Naive thymus-derived CD4-positive, alpha-beta T cell (primary cell): ENCODE measurements at regions of chr2 and their contacts with region 1.

Region 1: DNA sequence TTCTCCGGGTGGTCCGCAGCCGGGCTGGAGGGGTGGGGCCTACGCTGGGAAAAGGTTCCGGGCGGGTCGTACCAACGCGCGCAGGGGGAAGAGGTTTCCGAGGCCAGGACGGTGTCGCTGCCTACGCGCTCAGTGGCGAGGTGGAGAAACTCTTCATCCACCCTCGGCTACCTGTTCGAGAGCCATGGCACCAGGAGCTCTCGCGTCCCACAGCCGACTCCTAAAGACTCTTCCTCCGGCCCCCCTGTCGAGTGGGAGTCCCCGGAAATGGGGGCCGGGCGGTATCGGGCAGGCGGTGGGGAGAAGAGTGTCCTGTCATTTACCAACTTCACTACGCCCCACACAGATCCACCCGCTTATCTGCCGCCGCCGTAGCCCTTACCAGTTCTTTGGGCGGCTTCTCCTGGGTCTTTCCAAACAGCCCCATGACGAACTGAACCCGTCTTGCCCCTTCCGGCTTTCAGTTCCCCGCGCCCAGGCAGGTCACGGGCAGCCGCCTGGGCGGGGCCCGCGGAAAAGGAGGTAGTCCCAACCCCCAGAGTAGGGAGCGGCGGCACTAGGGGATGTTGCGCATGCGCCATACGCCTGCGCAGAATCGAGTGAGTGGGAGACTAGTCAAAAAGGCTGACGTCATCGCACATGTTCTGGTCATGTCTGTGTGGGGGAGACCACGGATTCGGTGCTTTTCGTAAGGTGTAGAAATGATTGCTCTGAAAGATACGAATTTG is at the start of gene CHMP3:
- DNase-seq: peak; percentile 95 to 98 (median 96)
- ATAC-seq: peak; percentile 94
- H3K4me3 ChIP-seq: peak within 1 kb of the TSS; percentile 72
- H3K4me3 Mint-ChIP-seq: peak within 1 kb of the TSS in 9 of 10 donors; percentile 95 to 99 (median 97)
- H3K27ac ChIP-seq: peak within 1 kb of the TSS; percentile 99
- H3K27ac Mint-ChIP-seq: peak within 1 kb of the TSS; percentile 96 to 100 (median 98)
- H3K4me1 ChIP-seq: peaks cover 11 to 25% of the 10 kb centered on the region in 2 donors
- H3K4me1 Mint-ChIP-seq: peaks cover 11 to 42% (median 29%) of the 10 kb centered on the region in 7 donors
- H3K27me3 ChIP-seq: no peaks in the 10 kb centered on the region
- H3K27me3 Mint-ChIP-seq: peaks cover 0 to 7% (median 0%) of the 10 kb centered on the region in 5 donors
- total RNA-seq, gene CHMP3: 39.9 to 103 (median 71.4) TPM

Region 2: DNA sequence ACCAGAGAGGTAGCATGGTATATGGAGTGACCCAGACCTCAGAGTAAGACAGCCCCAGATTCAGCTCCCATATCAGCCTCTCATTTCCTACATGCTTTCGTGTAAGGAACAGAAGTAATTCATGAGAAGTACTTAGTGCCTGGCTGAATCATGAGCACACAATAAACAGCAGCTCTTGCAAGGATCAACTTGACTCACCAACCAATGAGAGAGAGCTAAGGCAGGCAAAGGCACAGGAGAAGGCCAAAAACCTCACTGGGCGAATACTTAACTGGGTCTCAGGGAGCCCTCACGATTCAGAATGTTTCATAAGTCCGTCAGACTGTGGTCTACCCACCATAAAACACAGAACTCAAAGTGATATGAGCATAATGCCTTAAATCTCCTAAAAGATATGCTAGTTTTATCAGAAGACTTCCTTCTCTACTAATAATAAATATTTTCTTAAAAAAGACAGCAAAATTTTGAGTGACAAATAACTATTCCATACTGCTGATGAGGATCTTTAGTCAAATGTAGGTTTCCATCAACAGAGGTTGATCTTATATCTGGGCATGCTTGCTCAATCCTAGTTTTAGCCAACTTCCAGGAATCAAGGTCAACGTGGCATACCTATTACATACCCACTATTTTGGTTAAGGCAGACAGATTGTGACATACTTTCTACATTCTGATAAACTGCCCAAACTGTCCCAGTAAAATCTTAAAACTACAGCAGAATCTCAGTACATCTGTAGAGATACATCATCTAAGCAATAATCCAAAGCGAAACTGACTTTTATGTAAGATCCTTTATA is 402.7 kb before region 1 on chr2:
- CTCF ChIA-PET with region 1: no interaction called
- POLR2A ChIA-PET with region 1: no interaction called
- intact Hi-C with region 1: no loop called
- DNase-seq: no peak
- ATAC-seq: no peak
- H3K4me3 ChIP-seq: no peak overlapping the region
- H3K4me3 Mint-ChIP-seq: no peak overlapping the region
- H3K27ac ChIP-seq: no peak overlapping the region
- H3K27ac Mint-ChIP-seq: no peak overlapping the region
- H3K4me1 ChIP-seq: no peaks in the 10 kb centered on the region
- H3K4me1 Mint-ChIP-seq: no peaks in the 10 kb centered on the region
- H3K27me3 ChIP-seq: no peaks in the 10 kb centered on the region
- H3K27me3 Mint-ChIP-seq: no peaks in the 10 kb centered on the region

Region 3: GRCh38 chr2:86195055-86195807 is 367.9 kb before region 1 on chr2 and contains the start of gene IMMT:
- CTCF ChIA-PET with region 1: no interaction called
- POLR2A ChIA-PET with region 1: no interaction called
- intact Hi-C with region 1: loop called (anchors 1 to 2 kb)
- DNase-seq: peak; percentile 86 to 96 (median 94)
- ATAC-seq: peak; percentile 94
- H3K4me3 ChIP-seq: peak within 1 kb of the TSS; percentile 74
- H3K4me3 Mint-ChIP-seq: peak within 1 kb of the TSS; percentile 86 to 99 (median 95)
- H3K27ac ChIP-seq: peak within 1 kb of the TSS; percentile 97
- H3K27ac Mint-ChIP-seq: peak within 1 kb of the TSS; percentile 82 to 97 (median 90)
- H3K4me1 ChIP-seq: peaks cover 15 to 23% of the 10 kb centered on the region in 2 donors
- H3K4me1 Mint-ChIP-seq: peaks cover 35 to 74% (median 60%) of the 10 kb centered on the region in 7 donors
- H3K27me3 ChIP-seq: no peaks in the 10 kb centered on the region
- H3K27me3 Mint-ChIP-seq: no peaks in the 10 kb centered on the region
- total RNA-seq, gene IMMT: 59.2 to 164 (median 77.0) TPM

Region 4: DNA sequence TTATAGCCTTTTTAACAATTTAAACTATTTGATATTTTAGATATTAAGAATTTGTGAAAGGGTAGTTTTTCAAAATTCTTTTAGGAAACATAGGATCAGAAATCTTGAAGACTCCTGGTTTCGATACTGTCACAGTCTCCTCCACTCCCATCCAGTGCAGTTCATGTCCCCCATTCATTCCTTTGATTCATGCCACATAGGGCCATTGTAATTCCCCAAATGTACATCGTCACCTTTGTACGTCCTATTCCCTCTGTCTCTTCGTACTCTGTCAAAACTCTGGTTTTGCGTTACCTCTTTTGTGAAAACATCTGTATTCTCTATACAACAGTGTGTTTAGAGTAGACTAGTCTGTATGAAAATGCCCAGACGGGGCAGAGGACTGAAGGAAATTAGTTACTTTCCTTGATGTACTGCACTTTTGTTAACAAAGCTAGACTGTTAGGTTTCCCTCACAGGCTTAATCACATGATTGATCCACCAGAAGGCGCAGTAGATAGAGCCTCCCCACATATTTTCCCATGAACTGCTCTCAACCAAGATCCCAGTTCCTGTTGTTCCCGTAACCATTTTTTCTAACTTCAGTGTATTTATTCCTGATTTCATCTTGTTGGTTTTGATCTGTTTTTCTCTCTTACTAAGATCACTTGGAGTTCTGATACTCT is 361.3 kb before region 1 on chr2:
- CTCF ChIA-PET with region 1: no interaction called
- POLR2A ChIA-PET with region 1: no interaction called
- intact Hi-C with region 1: loop called in 1 of 2 experiments (anchors 1 kb)
- DNase-seq: no peak
- ATAC-seq: no peak
- H3K4me3 ChIP-seq: no peak overlapping the region
- H3K4me3 Mint-ChIP-seq: peak overlapping the region in 8 of 10 donors; percentile 27 to 95 (median 46)
- H3K27ac ChIP-seq: no peak overlapping the region
- H3K27ac Mint-ChIP-seq: peak overlapping the region in 5 of 9 donors; percentile 6 to 82 (median 55)
- H3K4me1 ChIP-seq: peaks cover 0 to 4% of the 10 kb centered on the region in 2 donors
- H3K4me1 Mint-ChIP-seq: peaks cover 22 to 58% (median 45%) of the 10 kb centered on the region in 7 donors
- H3K27me3 ChIP-seq: no peaks in the 10 kb centered on the region
- H3K27me3 Mint-ChIP-seq: no peaks in the 10 kb centered on the region

Region 5: GRCh38 chr2:86487062-86487461 is 76.0 kb before region 1 on chr2:
- CTCF ChIA-PET with region 1: no interaction called
- POLR2A ChIA-PET with region 1: no interaction called
- intact Hi-C with region 1: loop called in 1 of 2 experiments (anchors 5 kb)
- DNase-seq: peak in 2 of 9 donors; percentile 14 to 22
- ATAC-seq: no peak
- H3K4me3 ChIP-seq: no peak overlapping the region
- H3K4me3 Mint-ChIP-seq: no peak overlapping the region
- H3K27ac ChIP-seq: no peak overlapping the region
- H3K27ac Mint-ChIP-seq: peak overlapping the region in 8 of 9 donors; percentile 1 to 75 (median 44)
- H3K4me1 ChIP-seq: no peaks in the 10 kb centered on the region
- H3K4me1 Mint-ChIP-seq: peaks cover 0 to 34% (median 8%) of the 10 kb centered on the region in 7 donors
- H3K27me3 ChIP-seq: no peaks in the 10 kb centered on the region
- H3K27me3 Mint-ChIP-seq: no peaks in the 10 kb centered on the region

Region 6: GRCh38 chr2:86518481-86518880 is 44.6 kb before region 1 on chr2:
- CTCF ChIA-PET with region 1: no interaction called
- POLR2A ChIA-PET with region 1: interaction called, 3 read pairs
- intact Hi-C with region 1: loop called in 1 of 2 experiments (anchors 5 kb)
- DNase-seq: peak in 7 of 9 donors; percentile 23 to 59 (median 53)
- ATAC-seq: peak; percentile 73
- H3K4me3 ChIP-seq: no peak overlapping the region
- H3K4me3 Mint-ChIP-seq: no peak overlapping the region
- H3K27ac ChIP-seq: no peak overlapping the region
- H3K27ac Mint-ChIP-seq: peak overlapping the region in 1 of 9 donors; percentile 2
- H3K4me1 ChIP-seq: no peaks in the 10 kb centered on the region
- H3K4me1 Mint-ChIP-seq: peaks cover 0 to 16% (median 8%) of the 10 kb centered on the region in 7 donors
- H3K27me3 ChIP-seq: no peaks in the 10 kb centered on the region
- H3K27me3 Mint-ChIP-seq: no peaks in the 10 kb centered on the region

Region 7: GRCh38 chr2:86552889-86553288 is 10.2 kb before region 1 on chr2:
- CTCF ChIA-PET with region 1: interaction called, 6 read pairs
- POLR2A ChIA-PET with region 1: interaction called, 63 read pairs
- intact Hi-C with region 1: loop called (anchors 1 kb)
- DNase-seq: peak in 7 of 9 donors; percentile 42 to 75 (median 68)
- ATAC-seq: peak; percentile 87
- H3K4me3 ChIP-seq: peak overlapping the region; percentile 22
- H3K4me3 Mint-ChIP-seq: peak overlapping the region; percentile 61 to 90 (median 83)
- H3K27ac ChIP-seq: peak overlapping the region; percentile 8
- H3K27ac Mint-ChIP-seq: peak overlapping the region in 7 of 9 donors; percentile 71 to 98 (median 93)
- H3K4me1 ChIP-seq: peaks cover 13 to 30% of the 10 kb centered on the region in 2 donors
- H3K4me1 Mint-ChIP-seq: peaks cover 1 to 42% (median 19%) of the 10 kb centered on the region in 7 donors
- H3K27me3 ChIP-seq: no peaks in the 10 kb centered on the region
- H3K27me3 Mint-ChIP-seq: no peaks in the 10 kb centered on the region

Region 8: DNA sequence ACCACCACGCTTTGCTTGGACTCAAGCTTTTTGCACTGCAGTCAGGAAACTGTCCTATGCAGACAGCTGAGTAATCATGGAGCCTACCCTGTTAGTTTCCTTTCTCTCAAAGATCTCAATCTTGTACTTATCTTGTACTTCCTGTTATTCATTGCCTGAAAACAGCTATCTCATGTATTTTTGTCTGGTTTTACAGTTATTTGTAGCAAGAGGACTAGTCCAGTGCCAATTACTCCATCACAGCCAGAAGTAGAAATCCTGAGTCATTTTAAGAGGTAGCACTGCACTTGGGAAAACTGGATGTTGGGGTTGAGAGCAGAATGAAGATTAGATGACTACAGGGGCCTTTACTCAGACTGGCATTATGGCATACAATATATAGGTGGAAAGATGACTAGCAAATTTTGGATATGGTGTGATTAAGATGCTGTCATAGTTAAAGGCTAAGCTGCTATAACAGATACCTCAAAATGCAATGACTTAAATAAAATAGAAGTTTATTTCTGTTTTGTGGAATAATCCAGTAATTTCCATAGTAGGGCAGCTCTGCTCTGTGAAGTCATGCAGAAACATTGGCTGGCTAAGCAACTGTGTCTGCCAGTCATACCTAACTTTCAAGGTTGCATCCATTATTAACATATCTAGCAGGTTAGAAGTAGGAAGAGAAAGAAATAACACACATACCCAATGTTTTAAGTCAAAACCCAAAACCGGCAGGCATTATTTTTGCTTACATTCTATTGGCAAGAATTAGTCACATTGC is 21.2 kb after region 1 on chr2:
- CTCF ChIA-PET with region 1: interaction called, 3 read pairs
- POLR2A ChIA-PET with region 1: interaction called, 14 read pairs
- intact Hi-C with region 1: no loop called
- DNase-seq: peak in 7 of 9 donors; percentile 6 to 46 (median 29)
- ATAC-seq: peak; percentile 88
- H3K4me3 ChIP-seq: peak overlapping the region; percentile 21
- H3K4me3 Mint-ChIP-seq: peak overlapping the region in 9 of 10 donors; percentile 37 to 68 (median 47)
- H3K27ac ChIP-seq: peak overlapping the region; percentile 59
- H3K27ac Mint-ChIP-seq: peak overlapping the region; percentile 13 to 94 (median 88)
- H3K4me1 ChIP-seq: peaks cover 10 to 17% of the 10 kb centered on the region in 2 donors
- H3K4me1 Mint-ChIP-seq: peaks cover 5 to 27% (median 20%) of the 10 kb centered on the region in 7 donors
- H3K27me3 ChIP-seq: no peaks in the 10 kb centered on the region
- H3K27me3 Mint-ChIP-seq: peaks cover 0 to 2% (median 0%) of the 10 kb centered on the region in 5 donors

Region 9: GRCh38 chr2:86750240-86750839 is 187.3 kb after region 1 on chr2:
- CTCF ChIA-PET with region 1: no interaction called
- POLR2A ChIA-PET with region 1: no interaction called
- intact Hi-C with region 1: no loop called
- DNase-seq: no peak
- ATAC-seq: no peak
- H3K4me3 ChIP-seq: no peak overlapping the region
- H3K4me3 Mint-ChIP-seq: no peak overlapping the region
- H3K27ac ChIP-seq: no peak overlapping the region
- H3K27ac Mint-ChIP-seq: peak overlapping the region in 1 of 9 donors; percentile 6
- H3K4me1 ChIP-seq: no peaks in the 10 kb centered on the region
- H3K4me1 Mint-ChIP-seq: peaks cover 15 to 40% (median 33%) of the 10 kb centered on the region in 7 donors
- H3K27me3 ChIP-seq: no peaks in the 10 kb centered on the region
- H3K27me3 Mint-ChIP-seq: no peaks in the 10 kb centered on the region